Activated naive CD4-positive, alpha-beta T cell treated with anti-CD3 and anti-CD28 coated beads for 36 hours (primary cell): ENCODE measurements at regions of chr12 and their contacts with region 1.

Region 1: GRCh38 chr12:46459861-46460545 is 87.4 kb upstream of the SLC38A2 start:
- DNase-seq: peak; percentile 48
- H3K4me3 Mint-ChIP-seq: peak overlapping the region; percentile 71
- H3K27ac Mint-ChIP-seq: peak overlapping the region; percentile 91
- H3K4me1 Mint-ChIP-seq: peaks cover 64% of the 10 kb centered on the region
- H3K27me3 Mint-ChIP-seq: no peaks in the 10 kb centered on the region

Region 2: GRCh38 chr12:46382964-46383653 is 76.9 kb before region 1 on chr12:
- CTCF ChIA-PET with region 1: interaction called, 6 read pairs
- intact Hi-C with region 1: loop called (anchors 1 kb)
- DNase-seq: peak; percentile 96
- H3K4me3 Mint-ChIP-seq: peak overlapping the region; percentile 77
- H3K27ac Mint-ChIP-seq: peak overlapping the region; percentile 87
- H3K4me1 Mint-ChIP-seq: peaks cover 38% of the 10 kb centered on the region
- H3K27me3 Mint-ChIP-seq: no peaks in the 10 kb centered on the region

Region 3: DNA sequence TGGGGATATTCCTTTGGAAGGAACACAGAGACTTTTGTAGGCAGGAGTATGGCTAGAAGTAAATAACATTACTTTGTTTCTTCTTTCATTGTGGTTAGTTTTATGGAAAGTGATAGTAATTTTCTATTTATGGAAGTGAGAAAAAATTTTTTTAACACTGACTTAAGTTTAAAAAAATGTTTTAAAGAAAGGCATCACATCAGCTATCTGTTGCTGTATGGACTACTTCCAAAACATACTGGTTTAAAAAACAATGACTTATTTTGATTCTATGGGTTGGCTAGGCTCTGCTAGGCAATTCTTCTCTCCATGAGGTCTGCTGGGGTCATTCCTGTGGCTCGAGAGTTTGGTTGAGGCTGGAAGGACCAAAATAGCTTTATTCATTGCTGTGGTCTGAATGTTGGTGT is 55.8 kb before region 1 on chr12:
- CTCF ChIA-PET with region 1: interaction called, 3 read pairs
- intact Hi-C with region 1: loop called (anchors 2 kb)
- DNase-seq: no peak
- H3K4me3 Mint-ChIP-seq: no peak overlapping the region
- H3K27ac Mint-ChIP-seq: no peak overlapping the region
- H3K4me1 Mint-ChIP-seq: peaks cover 54% of the 10 kb centered on the region
- H3K27me3 Mint-ChIP-seq: no peaks in the 10 kb centered on the region

Region 4: GRCh38 chr12:46516933-46517578 is 57.1 kb after region 1 on chr12:
- CTCF ChIA-PET with region 1: interaction called, 4 read pairs
- intact Hi-C with region 1: loop called (anchors 1 kb)
- DNase-seq: peak; percentile 50
- H3K4me3 Mint-ChIP-seq: peak overlapping the region; percentile 17
- H3K27ac Mint-ChIP-seq: peak overlapping the region; percentile 90
- H3K4me1 Mint-ChIP-seq: peaks cover 60% of the 10 kb centered on the region
- H3K27me3 Mint-ChIP-seq: no peaks in the 10 kb centered on the region

Region 5: DNA sequence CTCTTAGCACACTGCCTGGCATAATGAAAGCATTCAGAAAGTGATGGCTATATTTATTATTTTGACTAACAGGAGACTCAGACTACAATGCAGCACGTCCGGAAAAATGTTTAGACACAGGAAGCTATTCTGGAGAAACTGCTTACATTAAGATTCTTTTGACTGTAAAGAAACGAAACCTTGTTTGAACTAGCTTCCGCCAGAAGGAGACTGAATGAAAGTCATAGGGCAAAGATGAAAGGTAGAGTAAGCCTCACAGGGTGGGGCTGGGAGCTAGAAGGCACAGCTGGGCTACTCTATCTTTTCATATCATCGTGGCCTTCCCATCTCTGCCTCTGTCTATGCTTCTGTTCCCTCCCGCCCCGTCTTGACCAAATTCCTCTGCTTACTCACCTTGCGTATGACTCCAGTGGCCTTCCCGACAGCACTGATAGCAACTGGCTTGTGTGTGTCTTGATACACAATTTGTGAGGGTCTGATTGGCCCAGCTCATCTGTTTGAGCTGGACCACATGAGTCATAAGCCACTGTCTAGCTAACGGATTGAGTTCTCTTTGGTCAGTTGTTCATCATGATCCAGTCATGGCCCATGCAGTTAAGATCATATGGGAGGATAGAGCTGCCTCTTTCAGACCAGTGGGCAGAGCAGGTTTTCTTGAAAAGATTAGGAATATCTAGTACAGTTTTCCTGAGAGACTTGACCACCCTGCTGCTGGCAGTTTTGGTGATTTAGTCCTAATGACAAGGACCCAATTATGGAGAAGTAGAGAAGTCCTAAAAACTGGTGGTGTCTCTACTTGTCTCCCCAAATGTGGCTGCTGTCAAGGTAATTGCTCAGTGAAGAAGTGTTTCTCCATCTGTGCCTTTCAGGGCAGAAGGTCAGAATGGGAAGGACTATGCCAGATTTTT is 64.1 kb after region 1 on chr12:
- CTCF ChIA-PET with region 1: interaction called, 6 read pairs
- intact Hi-C with region 1: loop called (anchors 1 kb)
- DNase-seq: peak; percentile 76
- H3K4me3 Mint-ChIP-seq: peak overlapping the region; percentile 61
- H3K27ac Mint-ChIP-seq: peak overlapping the region; percentile 81
- H3K4me1 Mint-ChIP-seq: peaks cover 38% of the 10 kb centered on the region
- H3K27me3 Mint-ChIP-seq: no peaks in the 10 kb centered on the region